Posterior cingulate gyrus (tissue), 11 donors: ENCODE measurements at regions of chr9 and their contacts with region 1.

Region 1: DNA sequence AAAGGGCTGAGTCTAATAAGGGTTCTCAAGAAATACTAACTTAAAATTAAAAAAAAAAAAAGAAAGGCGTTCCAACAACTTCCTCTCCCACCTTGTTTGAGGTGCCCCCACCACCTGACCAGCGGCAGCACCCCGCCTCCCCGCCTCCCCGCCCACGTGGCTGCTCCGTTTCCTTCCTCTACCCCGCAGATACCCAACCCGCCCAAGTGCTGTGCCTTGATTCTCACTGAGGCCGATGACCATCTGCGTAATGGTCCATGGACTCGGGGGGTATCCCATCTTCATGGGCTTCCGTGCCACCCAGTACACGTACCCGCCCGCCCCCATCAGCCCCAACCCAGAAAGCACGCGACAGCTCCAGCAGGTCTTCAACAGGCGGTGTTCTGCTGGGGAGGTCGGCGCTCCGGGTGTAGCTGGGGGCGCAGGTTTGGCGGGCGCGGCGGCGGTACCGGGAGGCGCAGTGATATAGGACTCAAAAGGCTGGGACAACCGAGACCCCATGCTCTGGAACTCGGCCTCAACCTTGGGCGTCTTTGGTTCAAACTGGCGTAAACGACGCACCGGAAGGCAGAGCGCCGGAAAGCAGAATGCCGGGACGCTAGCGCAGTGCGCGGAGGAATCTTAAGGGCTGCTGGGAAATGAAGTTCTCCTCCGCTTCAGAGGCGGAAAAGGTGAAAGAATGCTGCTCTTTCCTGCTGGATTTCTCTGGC is at the start of gene DMAC1:
- DNase-seq: peak; percentile 69 to 97 (median 82)

Region 2: GRCh38 chr9:7570107-7570720 is 229.2 kb before region 1 on chr9:
- intact Hi-C with region 1: loop called (anchors 10 kb)
- DNase-seq: peak in 4 of 10 donors; percentile 28 to 65 (median 48)

Region 3: DNA sequence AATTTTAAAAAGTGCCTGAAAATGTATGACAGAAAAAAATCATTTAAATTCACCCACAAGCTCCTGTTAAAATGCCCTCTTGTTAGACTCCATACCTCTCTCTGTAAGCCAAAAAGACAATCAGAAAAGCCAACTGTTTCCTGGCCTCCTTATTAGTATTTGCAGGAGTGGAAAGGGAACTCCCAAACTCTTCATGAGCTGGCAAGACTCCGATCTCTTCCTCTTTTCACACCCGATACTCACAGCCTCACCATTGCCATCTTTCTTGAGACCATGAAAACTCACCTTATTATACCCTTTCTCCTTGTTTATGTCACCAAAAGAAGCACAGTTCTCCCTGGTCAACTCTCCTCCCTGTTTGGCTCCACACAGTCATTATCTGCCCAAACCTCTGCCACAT is 197.7 kb before region 1 on chr9:
- intact Hi-C with region 1: no loop called
- DNase-seq: no peak